HCT116 (cell line): ENCODE measurements at regions of chr17 and their contacts with region 1.

Region 1: DNA sequence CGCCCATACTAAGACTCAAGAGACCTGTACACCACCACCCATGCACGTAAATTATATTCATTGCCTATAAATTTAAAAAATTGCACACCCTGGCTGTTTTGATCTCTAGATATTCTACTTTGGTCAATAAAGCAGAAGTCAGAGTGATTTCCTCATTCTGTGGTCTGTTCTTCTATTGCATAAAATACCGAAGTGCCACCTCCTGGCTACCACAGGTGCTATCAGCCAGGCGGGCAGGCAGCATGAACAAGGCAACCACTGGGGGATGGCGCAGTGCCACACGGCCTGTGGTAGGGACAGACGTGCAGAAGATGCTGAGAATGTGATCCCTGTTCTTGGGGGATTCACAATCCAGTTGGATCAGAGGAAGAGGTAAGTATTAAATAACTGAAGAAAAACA is 122.3 kb downstream of the CDK5R1 start:
- DNase-seq: peak; percentile 31
- ATAC-seq: peak; percentile 100
- H3K4me3 ChIP-seq: no peak overlapping the region
- H3K27ac ChIP-seq: no peak overlapping the region
- H3K4me1 ChIP-seq: peaks cover 3 to 7% of the 10 kb centered on the region in 2 experiments; a peak in 2 of 4 replicates
- H3K27me3 ChIP-seq: no peaks in the 10 kb centered on the region
- CTCF ChIP-seq: peak; percentile 41 to 59 (median 50); a peak in 5 of 6 replicates
- POLR2A ChIP-seq: no peak
- RAD21 ChIP-seq: peak; percentile 60

Region 2: DNA sequence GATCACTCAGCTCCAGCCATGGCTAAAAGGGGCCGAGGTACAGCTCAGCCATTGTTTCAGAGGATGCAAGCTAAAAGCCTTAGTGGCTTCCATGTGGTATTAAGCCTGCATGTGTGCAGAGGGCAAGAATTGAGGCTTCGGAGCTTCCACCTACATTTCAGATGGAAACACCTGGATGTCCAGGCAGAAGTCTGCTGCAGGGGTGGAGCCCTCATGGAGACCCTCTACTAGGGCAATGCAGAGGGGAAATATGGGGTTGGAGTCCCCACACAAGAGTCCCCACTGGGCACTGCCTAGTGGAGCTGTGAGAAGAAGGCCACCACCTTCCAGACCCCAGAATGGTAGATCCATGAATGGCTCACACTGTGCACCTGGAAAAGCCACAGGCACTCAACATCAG is 179.5 kb before region 1 on chr17:
- CTCF ChIA-PET with region 1: no interaction called
- POLR2A ChIA-PET with region 1: no interaction called
- RAD21 ChIA-PET with region 1: no interaction called
- intact Hi-C with region 1: no loop called
- DNase-seq: no peak
- ATAC-seq: no peak
- H3K4me3 ChIP-seq: no peak overlapping the region
- H3K27ac ChIP-seq: no peak overlapping the region
- H3K4me1 ChIP-seq: no peaks in the 10 kb centered on the region
- H3K27me3 ChIP-seq: no peaks in the 10 kb centered on the region
- CTCF ChIP-seq: no peak
- POLR2A ChIP-seq: no peak
- RAD21 ChIP-seq: no peak

Region 3: DNA sequence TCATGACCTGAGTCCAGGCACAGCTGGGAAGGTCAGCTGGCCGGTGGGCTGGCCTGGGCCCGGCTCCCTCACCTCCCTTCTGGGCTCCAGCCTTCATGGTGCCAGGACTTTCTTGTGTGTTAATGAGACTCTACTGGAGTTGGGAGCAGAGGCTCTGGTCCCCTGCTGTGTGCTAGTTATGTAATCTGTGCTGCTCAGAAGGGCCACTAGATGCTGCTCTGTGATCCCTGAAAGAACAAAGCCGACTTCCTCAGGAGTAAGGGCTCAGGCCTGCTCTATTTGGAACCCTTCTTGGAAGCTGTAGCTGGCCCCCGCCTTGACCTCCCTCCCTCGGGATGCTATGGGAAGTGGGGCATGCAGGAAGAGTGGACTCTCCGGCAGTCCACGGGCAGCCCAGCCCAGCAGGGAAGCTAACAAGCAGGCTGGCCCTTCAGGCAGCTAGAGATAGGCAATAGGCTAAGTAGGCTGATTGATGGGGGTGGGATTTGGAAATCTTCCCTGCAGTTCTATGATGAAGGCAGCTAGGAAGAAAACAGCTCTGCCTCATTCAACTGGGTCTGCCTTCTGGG is 125.5 kb before region 1 on chr17:
- CTCF ChIA-PET with region 1: no interaction called
- POLR2A ChIA-PET with region 1: no interaction called
- RAD21 ChIA-PET with region 1: no interaction called
- intact Hi-C with region 1: loop called (anchors 5 kb)
- DNase-seq: no peak
- ATAC-seq: no peak
- H3K4me3 ChIP-seq: no peak overlapping the region
- H3K27ac ChIP-seq: no peak overlapping the region; the same call in 1 of the 2 replicates
- H3K4me1 ChIP-seq: peaks cover 6 to 18% of the 10 kb centered on the region in 2 experiments
- H3K27me3 ChIP-seq: no peaks in the 10 kb centered on the region
- CTCF ChIP-seq: peak; percentile 33 to 46 (median 44); a peak in 4 of 6 replicates
- POLR2A ChIP-seq: no peak
- RAD21 ChIP-seq: peak; percentile 66